Endothelial cell of umbilical vein (primary cell): ENCODE measurements at regions of chr7 and their contacts with region 1.

Region 1: GRCh38 chr7:82542665-82543064 is 99.1 kb upstream of the CACNA2D1 start:
- DNase-seq: peak; percentile 77
- H3K4me3 ChIP-seq: no peak overlapping the region
- H3K27ac ChIP-seq: no peak overlapping the region
- H3K4me1 ChIP-seq: peaks cover 3% of the 10 kb centered on the region
- H3K27me3 ChIP-seq: no peaks in the 10 kb centered on the region
- CTCF ChIP-seq: no peak
- POLR2A ChIP-seq: no peak

Region 2: GRCh38 chr7:82521906-82522445 is 20.7 kb before region 1 on chr7:
- CTCF ChIA-PET with region 1: no interaction called
- POLR2A ChIA-PET with region 1: interaction called, 12 read pairs
- dilution Hi-C with region 1: no loop called
- intact Hi-C with region 1: no loop called
- DNase-seq: no peak
- H3K4me3 ChIP-seq: no peak overlapping the region
- H3K27ac ChIP-seq: no peak overlapping the region
- H3K4me1 ChIP-seq: no peaks in the 10 kb centered on the region
- H3K27me3 ChIP-seq: no peaks in the 10 kb centered on the region
- CTCF ChIP-seq: no peak
- POLR2A ChIP-seq: no peak